OCI-LY7 (cell line): ENCODE measurements at regions of chr15 and their contacts with region 1.

Region 1: DNA sequence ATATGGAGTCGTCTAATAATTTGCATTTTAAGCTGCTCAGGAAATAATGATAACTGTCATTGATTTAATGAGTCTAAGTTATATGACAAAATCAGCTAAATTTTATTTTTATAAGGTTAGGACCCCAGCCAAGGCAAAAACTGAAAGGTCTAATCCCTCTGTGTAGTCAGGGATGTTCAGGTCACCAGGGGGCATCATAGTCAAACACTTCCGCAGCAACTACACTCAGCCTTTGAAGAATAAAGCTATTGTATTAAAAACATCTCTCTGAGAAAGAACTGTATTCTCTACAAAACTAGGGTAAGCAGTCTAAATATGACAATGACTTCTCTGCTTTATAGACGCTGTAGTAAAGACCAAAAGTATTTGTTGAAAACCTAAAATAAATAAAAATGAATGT is 15.0 kb downstream of the INTS14 start:
- DNase-seq: peak; percentile 57
- H3K4me3 ChIP-seq: no peak overlapping the region
- H3K27ac ChIP-seq: no peak overlapping the region
- H3K4me1 ChIP-seq: no peaks in the 10 kb centered on the region
- CTCF ChIP-seq: peak; percentile 89

Region 2: DNA sequence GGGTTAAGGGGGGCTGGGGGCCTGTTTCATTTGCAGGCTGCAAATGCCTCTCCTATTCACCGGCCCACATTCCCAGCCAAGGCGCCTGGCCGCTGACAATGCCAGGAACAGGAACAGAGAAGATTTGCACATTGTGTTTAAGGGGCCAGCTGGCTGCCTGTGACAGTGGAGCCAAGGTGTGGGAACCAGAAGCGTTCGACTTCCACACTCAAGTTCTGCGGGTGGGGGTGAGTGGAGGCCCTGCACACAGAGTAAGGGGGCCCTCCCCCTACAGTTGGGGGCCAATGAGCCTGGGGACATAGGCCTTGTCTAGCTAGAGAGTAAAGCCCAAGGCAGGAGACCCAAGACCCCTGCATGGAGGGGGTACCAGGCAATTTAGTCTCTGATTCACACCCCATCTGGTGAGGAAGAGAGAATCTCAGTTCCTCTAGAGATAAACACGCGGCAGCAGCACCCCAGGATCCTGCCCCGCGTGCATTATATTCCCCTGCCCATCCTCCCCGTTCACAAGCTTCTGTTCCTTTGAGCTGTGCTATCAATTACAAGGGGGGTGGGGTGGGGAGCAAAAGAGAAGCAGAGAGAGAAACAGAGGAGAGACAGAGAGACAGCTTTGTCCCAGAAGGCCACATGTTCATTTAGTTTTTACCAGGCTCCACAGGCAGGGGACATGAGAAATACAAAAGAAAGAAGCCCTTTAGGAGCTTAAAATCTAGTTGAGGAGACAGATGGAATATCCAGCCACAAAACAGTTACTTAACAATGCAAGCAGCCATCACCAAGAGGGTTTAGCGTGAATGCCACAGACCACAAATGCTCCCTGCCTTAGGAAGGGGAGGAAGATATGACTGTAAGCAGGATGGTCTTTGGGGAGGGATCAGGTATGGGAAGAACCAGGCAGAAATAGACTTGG is 227.4 kb before region 1 on chr15:
- CTCF ChIA-PET with region 1: no interaction called
- POLR2A ChIA-PET with region 1: interaction called, 10 read pairs
- intact Hi-C with region 1: no loop called
- DNase-seq: no peak
- H3K4me3 ChIP-seq: no peak overlapping the region
- H3K27ac ChIP-seq: no peak overlapping the region
- H3K4me1 ChIP-seq: no peaks in the 10 kb centered on the region
- CTCF ChIP-seq: no peak